ENCODE measurements at regions of chr3 and their contacts with region 1.

Region 1: DNA sequence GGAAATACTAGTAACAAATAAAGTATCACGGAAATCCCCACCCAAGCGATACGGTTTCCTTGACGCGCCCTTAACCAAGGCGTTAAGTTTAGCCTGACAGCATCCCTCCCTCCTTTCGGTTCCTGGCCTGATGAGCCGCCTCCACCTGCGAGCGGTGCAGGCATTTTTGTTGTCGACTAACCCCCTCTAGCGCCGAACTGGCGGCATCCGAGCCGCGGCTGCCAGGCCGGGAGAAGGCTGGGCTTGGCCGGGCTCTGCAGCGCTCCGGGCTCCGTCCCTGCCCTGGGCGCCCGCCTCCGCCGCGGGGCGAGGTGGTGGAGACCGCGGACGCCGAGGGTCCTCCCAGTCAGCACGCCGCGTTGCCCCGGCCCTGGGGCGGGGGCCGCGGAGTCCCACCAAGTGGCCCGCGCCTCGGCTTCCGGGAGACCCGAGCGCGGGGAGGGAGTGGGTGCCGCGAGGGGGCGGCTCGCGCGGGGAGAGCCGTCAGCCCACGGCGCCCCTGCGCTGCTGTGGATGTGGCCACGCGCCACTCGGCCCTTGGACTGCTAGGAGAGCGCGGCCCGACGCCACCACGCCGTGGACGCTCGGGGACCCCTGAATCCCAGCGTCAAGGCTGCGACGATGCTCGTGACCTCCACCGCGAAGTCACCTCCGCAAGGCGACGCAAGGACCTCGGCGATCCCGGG is 1.1 kb upstream of the EPHA6 start:
- DNase-seq: peak; percentile 64
- H3K4me3 Mint-ChIP-seq: peak overlapping the region; percentile 69
- H3K27ac Mint-ChIP-seq: no peak overlapping the region
- H3K4me1 Mint-ChIP-seq: peaks cover 10% of the 10 kb centered on the region
- H3K27me3 Mint-ChIP-seq: peaks cover 24% of the 10 kb centered on the region

Region 2: GRCh38 chr3:96022676-96023075 is 790.6 kb before region 1 on chr3:
- intact Hi-C with region 1: loop called (anchors 5 kb)
- DNase-seq: no peak
- H3K4me3 Mint-ChIP-seq: no peak overlapping the region
- H3K27ac Mint-ChIP-seq: no peak overlapping the region
- H3K4me1 Mint-ChIP-seq: no peaks in the 10 kb centered on the region
- H3K27me3 Mint-ChIP-seq: no peaks in the 10 kb centered on the region

Region 3: DNA sequence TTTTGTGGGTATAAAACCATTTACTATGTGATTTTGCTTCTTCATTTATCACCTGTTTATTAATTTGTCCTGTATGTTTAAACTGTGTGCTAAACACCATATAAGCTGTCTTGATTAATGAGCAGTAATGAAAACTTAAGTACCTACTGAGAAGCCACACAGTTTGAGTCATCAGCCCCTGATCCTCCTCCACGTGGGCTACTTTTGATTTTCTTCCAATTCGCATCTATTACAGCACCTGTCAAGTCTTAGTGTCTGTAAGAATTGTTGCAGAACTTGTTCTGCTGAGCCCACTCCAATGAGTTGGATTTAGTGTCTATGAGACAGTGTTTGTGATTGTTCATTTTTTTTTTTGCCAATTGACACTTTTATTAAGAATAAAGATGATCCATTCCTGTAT is 17.9 kb after region 1 on chr3:
- intact Hi-C with region 1: no loop called
- DNase-seq: no peak
- H3K4me3 Mint-ChIP-seq: no peak overlapping the region
- H3K27ac Mint-ChIP-seq: no peak overlapping the region
- H3K4me1 Mint-ChIP-seq: no peaks in the 10 kb centered on the region
- H3K27me3 Mint-ChIP-seq: no peaks in the 10 kb centered on the region

Measured in activated T-helper 2 cell treated with anti-CD3 and anti-CD28 coated beads, Interferon-gamma antibody, Interleukin-2, Interleukin-4, amounts not matched to agents 10 μg/mL and 5 μg/mL and 100 μg/mL, durations not matched to agents 14 hours and 24 hours and 36 hours (primary cell).